ENCODE measurements at regions of chr5 and their contacts with region 1.

Region 1: GRCh38 chr5:142548739-142549275 is 137.1 kb downstream of the FGF1 start:
- DNase-seq: peak; percentile 79 to 93
- ATAC-seq: peak; percentile 98 to 100
- H3K4me3 ChIP-seq: no peak overlapping the region
- H3K27ac ChIP-seq: no peak overlapping the region; a peak in 1 of 6 replicates
- H3K4me1 ChIP-seq: peaks cover 2% of the 10 kb centered on the region; the same call in 1 of the 3 replicates
- CTCF ChIP-seq: peak; percentile 98
- EP300 ChIP-seq: no peak
- POLR2A ChIP-seq: no peak
- RAD21 ChIP-seq: peak; percentile 98 to 99

Region 2: GRCh38 chr5:142151436-142152383 is 397.1 kb before region 1 on chr5:
- CTCF ChIA-PET with region 1: interaction called, 46 read pairs
- POLR2A ChIA-PET with region 1: no interaction called
- DNase-seq: peak; percentile 37 to 77
- ATAC-seq: peak; percentile 77 to 80; a peak in 5 of 6 replicates
- H3K4me3 ChIP-seq: no peak overlapping the region
- H3K27ac ChIP-seq: no peak overlapping the region
- H3K4me1 ChIP-seq: no peaks in the 10 kb centered on the region
- CTCF ChIP-seq: peak; percentile 93
- EP300 ChIP-seq: no peak
- POLR2A ChIP-seq: no peak
- RAD21 ChIP-seq: peak; percentile 92

Region 3: GRCh38 chr5:142164315-142164714 is 384.5 kb before region 1 on chr5:
- CTCF ChIA-PET with region 1: interaction called, 15 read pairs
- POLR2A ChIA-PET with region 1: no interaction called
- DNase-seq: no peak
- ATAC-seq: no peak
- H3K4me3 ChIP-seq: no peak overlapping the region
- H3K27ac ChIP-seq: no peak overlapping the region
- H3K4me1 ChIP-seq: no peaks in the 10 kb centered on the region
- CTCF ChIP-seq: no peak
- EP300 ChIP-seq: no peak
- POLR2A ChIP-seq: no peak
- RAD21 ChIP-seq: no peak

Region 4: GRCh38 chr5:142356716-142357473 is 191.9 kb before region 1 on chr5:
- CTCF ChIA-PET with region 1: interaction called, 28 read pairs
- POLR2A ChIA-PET with region 1: interaction called, 3 read pairs
- DNase-seq: peak; percentile 86 to 87
- ATAC-seq: peak; percentile 85
- H3K4me3 ChIP-seq: peak overlapping the region; percentile 68
- H3K27ac ChIP-seq: peak overlapping the region; percentile 98 to 99
- H3K4me1 ChIP-seq: peaks cover 31% of the 10 kb centered on the region
- CTCF ChIP-seq: no peak
- EP300 ChIP-seq: peak in 1 of 2 experiments; percentile 20; a peak in 1 of 5 replicates
- POLR2A ChIP-seq: peak; percentile 68
- RAD21 ChIP-seq: peak in 1 of 2 experiments; percentile 28; a peak in 2 of 5 replicates

Region 5: GRCh38 chr5:142517840-142518239 is 31.0 kb before region 1 on chr5:
- CTCF ChIA-PET with region 1: no interaction called
- POLR2A ChIA-PET with region 1: no interaction called
- DNase-seq: no peak
- ATAC-seq: no peak
- H3K4me3 ChIP-seq: no peak overlapping the region
- H3K27ac ChIP-seq: no peak overlapping the region
- H3K4me1 ChIP-seq: peaks cover 4% of the 10 kb centered on the region; the same call in 2 of the 3 replicates
- CTCF ChIP-seq: no peak
- EP300 ChIP-seq: no peak
- POLR2A ChIP-seq: no peak
- RAD21 ChIP-seq: no peak

Region 6: DNA sequence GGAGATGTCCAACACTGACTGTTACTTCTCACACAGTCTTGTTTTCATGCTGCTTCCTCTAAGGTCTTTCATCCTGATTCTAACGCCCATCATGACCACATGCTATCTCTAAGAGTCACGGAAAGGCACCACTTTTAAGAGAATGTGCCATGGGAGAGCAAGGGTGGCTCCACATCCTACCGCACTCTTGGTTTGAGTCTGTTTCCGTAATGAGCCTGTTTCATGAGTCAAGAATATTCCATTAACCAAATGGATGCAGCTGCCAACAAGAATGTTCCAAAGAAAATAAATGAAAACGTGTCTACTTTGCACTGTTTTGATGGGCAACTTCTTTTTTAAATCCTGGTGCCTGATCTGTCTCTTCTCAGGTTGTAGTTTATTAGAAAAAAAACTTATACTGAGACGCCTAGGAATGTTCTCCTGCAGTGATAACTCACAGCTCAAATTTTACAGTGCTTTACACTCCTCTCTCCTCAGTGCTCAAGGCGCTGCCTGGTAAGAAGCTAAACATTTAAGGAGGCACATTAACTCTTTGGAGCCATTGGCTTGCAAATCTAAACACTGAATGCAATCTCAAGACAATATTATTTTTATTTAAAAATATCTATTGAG is 12.8 kb after region 1 on chr5:
- CTCF ChIA-PET with region 1: interaction called, 16 read pairs
- POLR2A ChIA-PET with region 1: no interaction called
- DNase-seq: no peak
- ATAC-seq: no peak
- H3K4me3 ChIP-seq: no peak overlapping the region
- H3K27ac ChIP-seq: no peak overlapping the region
- H3K4me1 ChIP-seq: no peaks in the 10 kb centered on the region
- CTCF ChIP-seq: no peak
- EP300 ChIP-seq: no peak
- POLR2A ChIP-seq: no peak
- RAD21 ChIP-seq: no peak

Region 7: GRCh38 chr5:142630927-142631539 is 82.2 kb after region 1 on chr5:
- CTCF ChIA-PET with region 1: no interaction called
- POLR2A ChIA-PET with region 1: no interaction called
- DNase-seq: no peak
- ATAC-seq: no peak
- H3K4me3 ChIP-seq: no peak overlapping the region
- H3K27ac ChIP-seq: no peak overlapping the region
- H3K4me1 ChIP-seq: no peaks in the 10 kb centered on the region
- CTCF ChIP-seq: no peak
- EP300 ChIP-seq: no peak
- POLR2A ChIP-seq: no peak
- RAD21 ChIP-seq: no peak